ENCODE measurements at regions of chrX and their contacts with region 1.

Region 1: DNA sequence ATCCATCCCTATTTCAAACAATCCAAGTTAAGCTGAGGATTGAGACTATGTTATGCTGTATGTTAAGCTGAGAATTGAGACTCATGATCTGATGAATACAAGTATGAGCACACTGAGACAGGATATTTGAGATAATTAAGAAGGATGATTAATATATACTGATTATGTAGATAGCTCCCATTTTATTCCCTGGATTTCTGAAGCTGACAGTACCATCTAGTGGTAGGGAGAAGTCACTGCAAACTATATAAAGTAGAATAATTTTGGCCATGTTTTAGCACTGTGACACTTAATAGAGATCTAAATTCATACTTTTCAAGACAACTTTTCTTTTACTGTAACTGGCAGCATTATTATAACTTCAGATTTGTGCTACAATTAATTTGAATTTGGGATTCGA is 63.8 kb upstream of the HPRT1 start:
- DNase-seq: no peak
- H3K4me3 ChIP-seq: no peak overlapping the region
- H3K4me3 Mint-ChIP-seq: no peak overlapping the region
- H3K27ac ChIP-seq: no peak overlapping the region
- H3K27ac Mint-ChIP-seq: no peak overlapping the region
- H3K4me1 ChIP-seq: no peaks in the 10 kb centered on the region
- H3K4me1 Mint-ChIP-seq: peaks cover 0 to 4% (median 0%) of the 10 kb centered on the region in 3 donors
- H3K27me3 ChIP-seq: no peaks in the 10 kb centered on the region
- H3K27me3 Mint-ChIP-seq: no peaks in the 10 kb centered on the region

Region 2: GRCh38 chrX:133792198-133792953 is 603.8 kb before region 1 on chrX:
- CTCF ChIA-PET with region 1: interaction called, 23 read pairs
- POLR2A ChIA-PET with region 1: no interaction called
- DNase-seq: peak; percentile 8 to 59 (median 43)
- H3K4me3 ChIP-seq: no peak overlapping the region
- H3K4me3 Mint-ChIP-seq: no peak overlapping the region
- H3K27ac ChIP-seq: no peak overlapping the region
- H3K27ac Mint-ChIP-seq: no peak overlapping the region
- H3K4me1 ChIP-seq: no peaks in the 10 kb centered on the region
- H3K4me1 Mint-ChIP-seq: no peaks in the 10 kb centered on the region
- H3K27me3 ChIP-seq: no peaks in the 10 kb centered on the region
- H3K27me3 Mint-ChIP-seq: peaks cover 6 to 9% of the 10 kb centered on the region in 2 donors

Measured in CD8-positive, alpha-beta memory T cell (primary cell).